H1 (cell line): ENCODE measurements at regions of chr18 and their contacts with region 1.

Region 1: DNA sequence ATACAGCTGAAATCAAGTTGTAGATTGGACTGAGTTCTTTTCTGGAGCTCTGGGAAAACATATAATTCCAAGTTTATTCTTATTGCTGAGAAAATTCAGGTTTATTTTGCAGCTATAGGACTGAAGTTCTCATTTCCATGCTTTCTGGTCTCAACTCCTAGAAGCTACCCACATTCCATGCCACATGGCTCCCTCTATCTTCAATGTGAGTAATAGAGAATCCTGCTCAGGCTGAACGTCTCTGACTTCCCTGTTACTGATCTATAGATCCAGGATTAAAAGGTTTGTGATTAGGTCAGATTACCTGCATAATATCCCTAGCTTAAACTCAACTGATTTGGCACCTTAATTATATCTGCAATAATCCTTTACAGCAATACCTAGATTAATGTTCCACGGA is 453.8 kb upstream of the MC4R start:
- DNase-seq: no peak
- H3K4me3 ChIP-seq: no peak overlapping the region
- H3K27ac ChIP-seq: no peak overlapping the region
- H3K4me1 ChIP-seq: no peaks in the 10 kb centered on the region
- H3K27me3 ChIP-seq: no peaks in the 10 kb centered on the region
- CTCF ChIP-seq: peak in 2 of 3 experiments; percentile 32 to 59; a peak in 3 of 4 replicates
- EP300 ChIP-seq: no peak
- POLR2A ChIP-seq: no peak
- RAD21 ChIP-seq: peak; percentile 53 to 63

Region 2: DNA sequence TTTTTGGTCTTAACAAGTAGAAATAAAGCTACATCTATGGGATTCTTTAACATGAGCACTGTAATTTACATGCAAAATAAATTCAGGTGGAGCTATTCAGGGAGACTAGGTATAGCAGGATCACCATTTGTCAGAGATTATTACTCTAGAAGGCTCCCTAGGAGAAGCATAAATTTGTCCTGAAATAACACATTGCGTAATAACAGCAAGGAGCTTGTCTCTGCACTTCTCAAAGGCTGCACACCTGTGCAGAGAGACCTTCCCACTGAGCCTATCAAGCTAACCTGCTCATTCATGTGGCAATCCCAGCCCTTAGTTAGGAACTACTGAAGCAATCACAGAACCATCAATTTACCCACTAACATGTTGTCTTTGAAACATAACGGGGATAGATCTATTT is 16.4 kb before region 1 on chr18:
- CTCF ChIA-PET with region 1: interaction called, 13 read pairs
- POLR2A ChIA-PET with region 1: no interaction called
- DNase-seq: no peak
- H3K4me3 ChIP-seq: no peak overlapping the region
- H3K27ac ChIP-seq: no peak overlapping the region
- H3K4me1 ChIP-seq: peaks cover 0 to 10% (median 3%) of the 10 kb centered on the region in 4 experiments; a peak in 6 of 7 replicates
- H3K27me3 ChIP-seq: peaks cover 0 to 18% (median 6%) of the 10 kb centered on the region in 4 experiments; a peak in 4 of 7 replicates
- CTCF ChIP-seq: no peak
- EP300 ChIP-seq: no peak
- POLR2A ChIP-seq: no peak
- RAD21 ChIP-seq: no peak

Region 3: DNA sequence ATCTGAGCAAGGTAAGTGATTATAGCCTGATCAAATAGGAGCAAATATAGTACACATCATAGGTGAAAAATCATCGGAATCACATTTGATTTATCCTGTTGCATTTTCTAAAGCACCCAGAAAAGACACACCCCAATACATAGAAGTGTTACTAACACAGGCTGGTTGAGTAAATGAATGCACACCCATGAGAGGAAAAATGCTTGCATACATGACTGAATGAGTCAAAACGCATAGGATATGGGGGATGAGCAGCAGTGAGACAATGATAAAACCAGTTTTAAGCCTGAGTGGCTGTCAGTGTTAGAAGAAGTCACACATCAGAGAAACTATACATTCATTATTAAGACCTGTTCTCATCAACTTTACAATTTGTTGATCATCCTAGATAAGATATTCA is 57.2 kb after region 1 on chr18:
- CTCF ChIA-PET with region 1: no interaction called
- POLR2A ChIA-PET with region 1: no interaction called
- DNase-seq: no peak
- H3K4me3 ChIP-seq: no peak overlapping the region
- H3K27ac ChIP-seq: no peak overlapping the region
- H3K4me1 ChIP-seq: no peaks in the 10 kb centered on the region
- H3K27me3 ChIP-seq: peaks cover 0 to 1% (median 0%) of the 10 kb centered on the region in 4 experiments; a peak in 1 of 7 replicates
- CTCF ChIP-seq: no peak
- EP300 ChIP-seq: no peak
- POLR2A ChIP-seq: no peak
- RAD21 ChIP-seq: no peak

Region 4: DNA sequence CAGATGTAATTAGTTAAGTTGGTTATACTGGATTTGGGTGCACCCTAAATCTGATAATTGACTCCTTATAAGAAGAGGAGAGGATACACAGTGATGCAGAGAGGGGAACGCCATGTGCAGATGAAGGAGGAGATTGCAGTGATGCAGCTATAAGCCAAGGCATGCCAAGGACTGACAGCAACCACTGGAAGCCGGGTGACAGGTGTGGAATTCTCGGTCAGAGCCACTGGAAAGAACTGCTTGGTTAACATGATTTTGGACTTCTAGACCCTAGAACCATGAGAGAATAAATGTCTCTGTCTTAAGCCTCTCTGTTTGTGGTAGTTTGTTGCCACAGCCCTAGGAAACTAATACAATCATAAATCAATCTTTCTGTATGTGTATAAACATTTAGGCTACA is 103.6 kb after region 1 on chr18:
- CTCF ChIA-PET with region 1: no interaction called
- POLR2A ChIA-PET with region 1: no interaction called
- DNase-seq: no peak
- H3K4me3 ChIP-seq: no peak overlapping the region
- H3K27ac ChIP-seq: no peak overlapping the region
- H3K4me1 ChIP-seq: no peaks in the 10 kb centered on the region
- H3K27me3 ChIP-seq: no peaks in the 10 kb centered on the region
- CTCF ChIP-seq: no peak
- EP300 ChIP-seq: no peak
- POLR2A ChIP-seq: no peak
- RAD21 ChIP-seq: no peak